ENCODE measurements at regions of chr15 and their contacts with region 1.

Region 1: DNA sequence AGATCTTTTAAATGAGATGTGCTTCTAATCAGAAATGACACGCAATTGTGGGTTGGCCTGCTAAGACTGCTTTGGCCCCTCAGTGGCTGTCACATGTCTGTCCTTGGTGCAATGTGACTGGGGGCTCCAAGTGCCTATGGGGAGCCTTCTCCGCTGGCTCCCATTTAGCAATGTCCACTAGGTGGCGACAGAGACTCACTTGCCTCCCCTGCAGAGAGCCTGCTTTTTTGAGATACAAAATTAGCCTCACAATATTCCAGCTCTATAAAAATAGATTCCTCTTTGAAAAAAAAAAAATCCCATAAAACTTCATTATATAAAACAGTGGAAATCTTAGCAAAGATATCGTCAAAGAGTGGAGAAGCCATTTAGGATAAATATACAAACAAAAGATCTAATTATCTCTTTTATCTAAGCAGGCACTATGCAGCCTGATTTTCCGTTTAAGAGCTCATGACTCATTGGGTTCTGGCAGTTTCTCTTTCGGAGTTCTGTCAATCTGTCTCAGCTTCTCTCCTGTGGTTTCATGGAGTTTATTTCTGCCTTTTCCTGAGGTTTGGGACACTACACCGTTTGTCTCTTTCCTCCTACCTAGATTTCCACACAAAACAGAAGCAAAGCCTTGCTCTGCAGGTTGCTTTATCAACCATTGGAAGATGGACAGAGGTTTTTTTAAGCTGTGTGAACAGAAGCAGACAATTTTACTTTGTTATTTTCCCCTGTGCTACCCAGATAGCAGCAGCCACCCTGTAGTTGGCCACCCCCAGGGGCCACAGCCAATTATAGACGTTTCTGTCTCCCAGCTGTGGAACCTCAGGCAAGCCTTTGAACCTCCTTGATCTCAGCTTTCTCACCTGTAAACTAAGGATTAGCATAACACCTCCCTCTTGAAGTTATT is 68.4 kb upstream of the TNFAIP8L3 start:
- DNase-seq: peak; percentile 85
- H3K4me3 ChIP-seq: peak overlapping the region in 1 of 3 experiments; percentile 23
- H3K27ac ChIP-seq: no peak overlapping the region
- H3K4me1 ChIP-seq: peaks cover 4% of the 10 kb centered on the region
- H3K27me3 ChIP-seq: peaks cover 9 to 12% of the 10 kb centered on the region in 2 experiments
- CTCF ChIP-seq: peak; percentile 87 to 94
- POLR2A ChIP-seq: no peak

Region 2: DNA sequence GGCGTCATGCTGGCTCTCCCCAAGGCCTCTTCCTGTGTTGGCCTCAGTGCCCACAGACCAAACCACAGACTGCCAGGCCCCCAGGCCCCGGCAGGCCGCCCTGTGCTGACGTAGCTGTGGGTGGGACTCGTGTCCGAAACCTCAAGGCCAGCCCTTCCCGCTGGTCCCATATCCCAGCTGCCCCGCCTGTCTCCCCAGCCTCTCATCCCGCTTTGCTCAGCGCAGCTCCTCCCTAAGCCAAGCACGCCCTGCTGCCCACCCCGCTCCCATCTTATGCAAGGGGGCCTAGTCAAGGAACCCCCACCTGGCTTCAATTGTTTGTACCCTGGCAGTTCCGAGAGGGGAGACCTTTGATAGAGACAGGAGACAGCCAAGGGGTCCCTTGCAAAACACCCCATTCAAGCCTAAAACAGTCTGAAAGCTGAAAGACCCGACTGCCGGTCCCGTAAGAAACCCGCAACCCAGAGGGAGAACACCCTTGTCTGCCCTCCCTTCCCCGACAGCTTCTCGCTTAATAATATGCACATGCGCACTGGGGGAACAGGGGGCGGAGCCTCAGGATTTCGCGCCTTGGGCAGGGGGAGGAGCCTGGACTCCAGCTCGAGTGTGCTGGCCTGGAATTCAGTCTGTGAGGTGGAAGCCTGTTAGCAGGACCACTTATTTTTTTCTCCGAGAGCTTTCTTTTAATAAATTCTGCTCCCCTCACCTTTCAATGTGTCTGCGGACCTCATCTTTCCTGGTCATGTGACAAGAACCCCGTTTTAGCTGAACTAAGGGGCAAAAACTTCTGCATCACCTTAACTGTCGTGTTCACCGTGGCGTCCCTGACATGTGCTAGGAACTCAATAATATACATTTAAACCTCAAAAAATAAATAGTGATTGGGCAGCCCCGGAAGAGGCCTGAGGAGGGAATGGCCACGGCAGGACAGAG is 85.6 kb before region 1 on chr15:
- CTCF ChIA-PET with region 1: interaction called, 10 read pairs
- POLR2A ChIA-PET with region 1: no interaction called
- dilution Hi-C with region 1: no loop called
- intact Hi-C with region 1: no loop called
- DNase-seq: peak; percentile 62
- H3K4me3 ChIP-seq: peak overlapping the region in 1 of 3 experiments; percentile 20
- H3K27ac ChIP-seq: peak overlapping the region; percentile 62
- H3K4me1 ChIP-seq: peaks cover 3% of the 10 kb centered on the region
- H3K27me3 ChIP-seq: no peaks in the 10 kb centered on the region
- CTCF ChIP-seq: no peak
- POLR2A ChIP-seq: peak; percentile 50

Region 3: GRCh38 chr15:51132384-51133139 is 30.6 kb before region 1 on chr15:
- CTCF ChIA-PET with region 1: interaction called, 88 read pairs
- POLR2A ChIA-PET with region 1: no interaction called
- dilution Hi-C with region 1: no loop called
- intact Hi-C with region 1: loop called (anchors 1 kb)
- DNase-seq: peak; percentile 97
- H3K4me3 ChIP-seq: no peak overlapping the region
- H3K27ac ChIP-seq: peak overlapping the region; percentile 91
- H3K4me1 ChIP-seq: peaks cover 26% of the 10 kb centered on the region
- H3K27me3 ChIP-seq: no peaks in the 10 kb centered on the region
- CTCF ChIP-seq: peak; percentile 95 to 99
- POLR2A ChIP-seq: peak; percentile 33

Region 4: DNA sequence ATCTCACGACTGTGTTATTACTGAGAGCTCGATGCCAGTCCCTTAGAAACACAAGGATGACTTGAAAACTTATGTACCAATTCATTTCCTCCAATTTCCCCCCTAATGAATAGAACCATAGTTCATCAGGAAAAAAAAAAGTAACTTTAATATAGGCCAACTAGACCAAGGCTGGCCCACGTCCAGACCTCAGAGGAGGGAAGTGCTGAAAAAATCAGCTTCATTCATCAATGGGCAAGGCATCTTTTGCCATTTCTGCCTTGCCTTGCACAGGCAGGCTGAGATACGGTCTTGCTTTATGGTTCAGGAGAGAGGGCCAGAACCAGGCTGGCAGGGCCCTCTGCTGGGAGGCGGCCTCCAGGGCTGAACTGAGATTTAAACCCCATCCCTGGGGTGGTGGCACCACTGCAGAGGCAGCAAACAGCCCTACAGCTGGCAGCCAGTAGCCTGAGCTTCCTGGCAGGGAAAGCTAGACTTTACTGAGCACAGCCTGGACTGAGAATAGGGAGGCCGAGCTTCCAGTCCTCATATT is 35.7 kb after region 1 on chr15:
- CTCF ChIA-PET with region 1: interaction called, 470 read pairs
- POLR2A ChIA-PET with region 1: no interaction called
- dilution Hi-C with region 1: no loop called
- intact Hi-C with region 1: no loop called
- DNase-seq: no peak
- H3K4me3 ChIP-seq: no peak overlapping the region
- H3K27ac ChIP-seq: no peak overlapping the region
- H3K4me1 ChIP-seq: no peaks in the 10 kb centered on the region
- H3K27me3 ChIP-seq: peaks cover 58 to 68% of the 10 kb centered on the region in 2 experiments
- CTCF ChIP-seq: no peak
- POLR2A ChIP-seq: no peak

Region 5: GRCh38 chr15:51281368-51281967 is 118.4 kb after region 1 on chr15:
- CTCF ChIA-PET with region 1: interaction called, 30 read pairs
- POLR2A ChIA-PET with region 1: no interaction called
- dilution Hi-C with region 1: no loop called
- intact Hi-C with region 1: loop called (anchors 1 kb)
- DNase-seq: peak; percentile 65
- H3K4me3 ChIP-seq: no peak overlapping the region
- H3K27ac ChIP-seq: no peak overlapping the region
- H3K4me1 ChIP-seq: no peaks in the 10 kb centered on the region
- H3K27me3 ChIP-seq: peaks cover 70 to 71% of the 10 kb centered on the region in 2 experiments
- CTCF ChIP-seq: peak; percentile 47 to 83
- POLR2A ChIP-seq: no peak

Region 6: GRCh38 chr15:51401872-51402517 is 238.9 kb after region 1 on chr15:
- CTCF ChIA-PET with region 1: interaction called, 46 read pairs
- POLR2A ChIA-PET with region 1: no interaction called
- dilution Hi-C with region 1: no loop called
- intact Hi-C with region 1: loop called (anchors 2 kb)
- DNase-seq: peak; percentile 13
- H3K4me3 ChIP-seq: no peak overlapping the region
- H3K27ac ChIP-seq: no peak overlapping the region
- H3K4me1 ChIP-seq: no peaks in the 10 kb centered on the region
- H3K27me3 ChIP-seq: peaks cover 68 to 69% of the 10 kb centered on the region in 2 experiments
- CTCF ChIP-seq: peak; percentile 73 to 83
- POLR2A ChIP-seq: no peak